ENCODE measurements at regions of chr18 and their contacts with region 1.

Region 1: DNA sequence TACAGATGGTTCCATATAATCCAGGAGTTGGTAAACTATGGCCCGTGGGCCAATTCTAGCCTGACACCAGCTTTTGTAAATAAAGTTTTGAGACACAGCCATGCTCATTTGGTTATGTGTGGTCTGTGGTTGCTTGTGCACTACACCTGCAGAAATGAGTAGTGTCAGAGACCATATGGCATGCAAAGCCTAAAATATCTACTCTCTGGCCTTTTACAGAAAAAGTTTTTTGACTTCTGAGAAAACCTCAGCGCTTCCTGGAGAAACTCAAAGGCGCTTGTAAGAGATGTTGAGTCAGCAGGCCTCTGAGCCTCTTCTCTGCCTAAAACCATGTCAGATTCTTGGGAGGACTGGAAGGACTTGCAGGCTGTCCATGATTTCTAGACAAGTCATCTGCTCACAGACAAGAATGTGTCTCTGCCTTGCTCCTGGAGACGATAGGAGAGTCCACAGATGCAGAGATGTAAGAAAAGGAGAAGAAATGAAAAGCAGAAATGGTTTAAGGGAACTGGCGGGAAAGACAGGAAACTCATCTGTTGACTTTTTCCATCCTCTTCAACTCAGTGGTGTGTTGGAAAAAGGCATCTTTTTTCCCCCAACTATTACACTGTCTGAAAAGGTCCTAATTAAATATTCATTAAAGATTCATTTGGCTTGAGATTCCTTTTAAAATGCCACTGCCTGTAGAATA is 5.2 kb downstream of the TTC39C start:
- DNase-seq: peak in 9 of 14 experiments; percentile 21 to 87 (median 44)
- ATAC-seq: peak; percentile 71
- H3K4me3 ChIP-seq: peak overlapping the region; percentile 17
- H3K4me3 Mint-ChIP-seq: peak overlapping the region; percentile 74
- H3K27ac ChIP-seq: peak overlapping the region; percentile 25 to 38
- H3K27ac Mint-ChIP-seq: peak overlapping the region; percentile 86
- H3K4me1 ChIP-seq: peaks cover 73% of the 10 kb centered on the region
- H3K4me1 Mint-ChIP-seq: peaks cover 95% of the 10 kb centered on the region
- H3K27me3 ChIP-seq: no peaks in the 10 kb centered on the region
- H3K27me3 Mint-ChIP-seq: no peaks in the 10 kb centered on the region
- CTCF ChIP-seq: no peak

Region 2: GRCh38 chr18:23740105-23740830 is 279.5 kb before region 1 on chr18:
- CTCF ChIA-PET with region 1: no interaction called
- POLR2A ChIA-PET with region 1: no interaction called
- intact Hi-C with region 1: no loop called
- DNase-seq: no peak
- ATAC-seq: no peak
- H3K4me3 ChIP-seq: no peak overlapping the region
- H3K4me3 Mint-ChIP-seq: no peak overlapping the region
- H3K27ac ChIP-seq: no peak overlapping the region
- H3K27ac Mint-ChIP-seq: no peak overlapping the region
- H3K4me1 ChIP-seq: peaks cover 15% of the 10 kb centered on the region
- H3K4me1 Mint-ChIP-seq: peaks cover 48% of the 10 kb centered on the region
- H3K27me3 ChIP-seq: peaks cover 0 to 4% of the 10 kb centered on the region in 2 experiments
- H3K27me3 Mint-ChIP-seq: peaks cover 8% of the 10 kb centered on the region
- CTCF ChIP-seq: no peak

Region 3: DNA sequence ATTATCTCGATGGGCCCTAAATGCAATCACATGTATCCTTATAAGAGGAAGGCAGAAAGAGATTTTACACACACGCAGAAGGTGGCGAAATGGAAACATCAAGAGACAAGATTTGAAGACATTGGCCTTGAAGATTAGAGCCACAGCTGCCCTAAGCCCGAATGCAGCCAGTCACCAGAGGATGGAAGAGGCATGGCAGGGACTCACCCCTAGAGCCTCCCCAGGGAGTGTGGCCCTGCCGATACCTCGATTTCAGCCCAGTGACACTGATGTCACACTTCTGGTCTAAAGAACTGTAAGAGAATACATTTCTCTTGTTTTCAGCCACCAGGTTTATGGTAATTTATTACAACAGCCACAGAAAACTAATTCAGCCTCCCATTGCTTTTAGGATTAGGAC is 12.1 kb after region 1 on chr18:
- CTCF ChIA-PET with region 1: no interaction called
- POLR2A ChIA-PET with region 1: interaction called, 5 read pairs
- intact Hi-C with region 1: loop called in 1 of 2 experiments (anchors 2 kb)
- DNase-seq: no peak
- ATAC-seq: no peak
- H3K4me3 ChIP-seq: no peak overlapping the region
- H3K4me3 Mint-ChIP-seq: peak overlapping the region; percentile 35
- H3K27ac ChIP-seq: no peak overlapping the region
- H3K27ac Mint-ChIP-seq: peak overlapping the region; percentile 17
- H3K4me1 ChIP-seq: peaks cover 62% of the 10 kb centered on the region
- H3K4me1 Mint-ChIP-seq: peaks cover 93% of the 10 kb centered on the region
- H3K27me3 ChIP-seq: no peaks in the 10 kb centered on the region
- H3K27me3 Mint-ChIP-seq: no peaks in the 10 kb centered on the region
- CTCF ChIP-seq: no peak

Region 4: GRCh38 chr18:24051031-24051947 is 31.5 kb after region 1 on chr18:
- CTCF ChIA-PET with region 1: no interaction called
- POLR2A ChIA-PET with region 1: interaction called, 8 read pairs
- intact Hi-C with region 1: loop called (anchors 2 to 5 kb)
- DNase-seq: no peak
- ATAC-seq: no peak
- H3K4me3 ChIP-seq: no peak overlapping the region
- H3K4me3 Mint-ChIP-seq: peak overlapping the region; percentile 39
- H3K27ac ChIP-seq: peak overlapping the region; percentile 3 to 10
- H3K27ac Mint-ChIP-seq: peak overlapping the region; percentile 63
- H3K4me1 ChIP-seq: peaks cover 53% of the 10 kb centered on the region
- H3K4me1 Mint-ChIP-seq: peaks cover 95% of the 10 kb centered on the region
- H3K27me3 ChIP-seq: no peaks in the 10 kb centered on the region
- H3K27me3 Mint-ChIP-seq: no peaks in the 10 kb centered on the region
- CTCF ChIP-seq: no peak